CD8-positive, alpha-beta T cell (primary cell): ENCODE measurements at regions of chr2 and their contacts with region 1.

Region 1: DNA sequence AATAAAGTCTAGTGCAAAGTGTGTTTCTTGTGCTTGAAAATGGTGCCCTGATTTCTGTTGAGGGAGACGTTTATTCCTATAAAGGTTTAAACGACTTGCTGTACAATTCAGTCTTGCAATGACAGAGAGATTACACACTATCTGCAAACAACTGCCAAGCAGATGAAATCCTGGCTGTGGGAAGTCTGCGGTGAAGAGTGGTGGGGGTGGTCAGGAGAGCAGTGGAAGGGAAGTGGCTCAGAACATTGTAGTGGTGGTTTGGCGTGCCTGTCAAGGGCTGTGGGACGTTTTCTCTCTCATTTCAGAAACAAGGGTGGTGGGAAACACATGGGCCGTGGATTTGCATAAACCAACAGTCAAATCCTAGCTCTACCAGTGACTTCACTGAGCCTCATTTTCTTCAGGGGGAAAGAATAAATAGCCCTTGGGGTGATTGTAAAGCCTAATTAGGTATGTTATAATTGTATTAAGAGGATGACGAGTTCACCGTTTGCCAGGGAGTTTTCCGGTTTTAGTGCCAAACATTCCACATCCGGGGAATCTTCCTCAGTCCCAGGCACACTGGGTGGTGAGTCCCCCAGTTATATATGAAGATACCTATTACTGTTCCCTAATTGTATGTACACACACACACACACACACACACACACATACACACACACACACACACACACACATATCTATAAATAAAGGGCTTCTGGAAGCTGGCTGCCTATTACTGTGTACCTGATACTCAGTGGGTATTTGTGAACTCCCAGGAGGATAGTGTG is 115.0 kb downstream of the SPTBN1 start:
- DNase-seq: peak; percentile 23 to 87 (median 69)
- ATAC-seq: peak; percentile 8
- H3K4me3 ChIP-seq: peak overlapping the region; percentile 13 to 21
- H3K4me3 Mint-ChIP-seq: peak overlapping the region; percentile 81
- H3K27ac ChIP-seq: peak overlapping the region; percentile 87 to 94
- H3K27ac Mint-ChIP-seq: peak overlapping the region; percentile 100
- H3K4me1 ChIP-seq: peaks cover 94% of the 10 kb centered on the region
- H3K4me1 Mint-ChIP-seq: peaks cover 95% of the 10 kb centered on the region
- H3K27me3 ChIP-seq: no peaks in the 10 kb centered on the region
- H3K27me3 Mint-ChIP-seq: no peaks in the 10 kb centered on the region
- CTCF ChIP-seq: no peak

Region 2: GRCh38 chr2:54589340-54590215 is 18.5 kb after region 1 on chr2:
- CTCF ChIA-PET with region 1: interaction called, 4 read pairs
- POLR2A ChIA-PET with region 1: interaction called, 24 read pairs
- intact Hi-C with region 1: loop called in 1 of 2 experiments (anchors 1 kb)
- DNase-seq: peak in 5 of 9 experiments; percentile 43 to 71 (median 48)
- ATAC-seq: peak; percentile 59
- H3K4me3 ChIP-seq: peak overlapping the region in 1 of 2 experiments; percentile 46
- H3K4me3 Mint-ChIP-seq: peak overlapping the region; percentile 72
- H3K27ac ChIP-seq: peak overlapping the region; percentile 60
- H3K27ac Mint-ChIP-seq: peak overlapping the region; percentile 92
- H3K4me1 ChIP-seq: peaks cover 88% of the 10 kb centered on the region
- H3K4me1 Mint-ChIP-seq: peaks cover 96% of the 10 kb centered on the region
- H3K27me3 ChIP-seq: no peaks in the 10 kb centered on the region
- H3K27me3 Mint-ChIP-seq: no peaks in the 10 kb centered on the region
- CTCF ChIP-seq: no peak

Region 3: GRCh38 chr2:54597153-54597848 is 26.2 kb after region 1 on chr2:
- CTCF ChIA-PET with region 1: interaction called, 11 read pairs
- POLR2A ChIA-PET with region 1: interaction called, 3 read pairs
- intact Hi-C with region 1: no loop called
- DNase-seq: peak in 3 of 9 experiments; percentile 29 to 61 (median 37)
- ATAC-seq: peak; percentile 27
- H3K4me3 ChIP-seq: peak overlapping the region in 1 of 2 experiments; percentile 7
- H3K4me3 Mint-ChIP-seq: peak overlapping the region; percentile 80
- H3K27ac ChIP-seq: peak overlapping the region; percentile 35 to 71
- H3K27ac Mint-ChIP-seq: peak overlapping the region; percentile 95
- H3K4me1 ChIP-seq: peaks cover 89% of the 10 kb centered on the region
- H3K4me1 Mint-ChIP-seq: peaks cover 94% of the 10 kb centered on the region
- H3K27me3 ChIP-seq: no peaks in the 10 kb centered on the region
- H3K27me3 Mint-ChIP-seq: no peaks in the 10 kb centered on the region
- CTCF ChIP-seq: no peak